CD8-positive, alpha-beta T cell (primary cell): ENCODE measurements at regions of chr12 and their contacts with region 1.

Region 1: GRCh38 chr12:25208554-25208953 is 13.5 kb downstream of the ETFRF1 start:
- DNase-seq: no peak
- ATAC-seq: no peak
- H3K4me3 ChIP-seq: no peak overlapping the region
- H3K4me3 Mint-ChIP-seq: no peak overlapping the region
- H3K27ac ChIP-seq: no peak overlapping the region
- H3K27ac Mint-ChIP-seq: peak overlapping the region; percentile 32
- H3K4me1 ChIP-seq: no peaks in the 10 kb centered on the region
- H3K4me1 Mint-ChIP-seq: peaks cover 13% of the 10 kb centered on the region
- H3K27me3 ChIP-seq: no peaks in the 10 kb centered on the region
- H3K27me3 Mint-ChIP-seq: no peaks in the 10 kb centered on the region
- CTCF ChIP-seq: no peak

Region 2: DNA sequence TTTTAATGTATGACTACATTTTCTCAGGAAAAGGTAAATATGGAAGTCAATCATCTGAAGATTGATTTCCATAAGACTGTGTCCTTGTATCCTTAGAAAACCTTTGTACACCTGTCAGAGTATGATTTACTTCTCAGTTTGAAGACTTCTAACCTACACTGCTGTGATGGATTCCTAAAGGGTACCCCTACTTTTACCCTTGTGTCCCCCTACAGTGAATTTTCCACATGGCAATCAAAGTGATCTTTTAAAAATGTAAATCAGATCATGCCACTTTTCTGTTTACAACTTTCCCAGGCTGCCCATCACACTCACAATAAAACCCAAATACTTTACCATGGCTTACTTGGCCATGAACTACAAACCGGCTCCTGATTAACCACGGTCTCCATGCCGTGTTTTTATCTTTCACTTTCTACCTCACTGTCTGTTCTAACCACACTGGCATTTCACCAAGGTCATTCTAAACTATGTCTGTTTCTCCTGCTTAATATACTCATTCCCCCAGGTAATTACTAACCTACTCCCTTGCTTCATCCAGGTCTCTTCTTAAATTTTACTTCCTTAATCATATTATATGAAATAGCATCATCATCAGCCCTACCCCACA is 21.7 kb before region 1 on chr12:
- CTCF ChIA-PET with region 1: no interaction called
- POLR2A ChIA-PET with region 1: no interaction called
- intact Hi-C with region 1: no loop called
- DNase-seq: peak in 2 of 9 experiments; percentile 46 to 61
- ATAC-seq: peak; percentile 75
- H3K4me3 ChIP-seq: peak overlapping the region; percentile 34 to 36
- H3K4me3 Mint-ChIP-seq: peak overlapping the region; percentile 86
- H3K27ac ChIP-seq: peak overlapping the region; percentile 11 to 26
- H3K27ac Mint-ChIP-seq: peak overlapping the region; percentile 85
- H3K4me1 ChIP-seq: peaks cover 7% of the 10 kb centered on the region
- H3K4me1 Mint-ChIP-seq: peaks cover 13% of the 10 kb centered on the region
- H3K27me3 ChIP-seq: no peaks in the 10 kb centered on the region
- H3K27me3 Mint-ChIP-seq: no peaks in the 10 kb centered on the region
- CTCF ChIP-seq: no peak

Region 3: GRCh38 chr12:25241167-25242020 is 32.8 kb after region 1 on chr12:
- CTCF ChIA-PET with region 1: interaction called, 10 read pairs
- POLR2A ChIA-PET with region 1: interaction called, 3 read pairs
- intact Hi-C with region 1: loop called (anchors 1 to 5 kb)
- DNase-seq: peak in 7 of 9 experiments; percentile 6 to 87 (median 37)
- ATAC-seq: peak; percentile 94
- H3K4me3 ChIP-seq: no peak overlapping the region
- H3K4me3 Mint-ChIP-seq: no peak overlapping the region
- H3K27ac ChIP-seq: peak overlapping the region; percentile 9 to 70
- H3K27ac Mint-ChIP-seq: peak overlapping the region; percentile 81
- H3K4me1 ChIP-seq: peaks cover 9% of the 10 kb centered on the region
- H3K4me1 Mint-ChIP-seq: peaks cover 65% of the 10 kb centered on the region
- H3K27me3 ChIP-seq: no peaks in the 10 kb centered on the region
- H3K27me3 Mint-ChIP-seq: no peaks in the 10 kb centered on the region
- CTCF ChIP-seq: peak; percentile 96

Region 4: GRCh38 chr12:25250744-25251730 is 42.5 kb after region 1 on chr12 and contains the start of gene KRAS:
- CTCF ChIA-PET with region 1: no interaction called
- POLR2A ChIA-PET with region 1: no interaction called
- intact Hi-C with region 1: loop called in 1 of 2 experiments (anchors 5 kb)
- DNase-seq: peak; percentile 84 to 98 (median 91)
- ATAC-seq: peak; percentile 90
- H3K4me3 ChIP-seq: peak within 1 kb of the TSS; percentile 70 to 79
- H3K4me3 Mint-ChIP-seq: peak within 1 kb of the TSS; percentile 93
- H3K27ac ChIP-seq: peak within 1 kb of the TSS; percentile 67 to 75
- H3K27ac Mint-ChIP-seq: peak within 1 kb of the TSS; percentile 95
- H3K4me1 ChIP-seq: peaks cover 11% of the 10 kb centered on the region
- H3K4me1 Mint-ChIP-seq: peaks cover 38% of the 10 kb centered on the region
- H3K27me3 ChIP-seq: no peaks in the 10 kb centered on the region
- H3K27me3 Mint-ChIP-seq: no peaks in the 10 kb centered on the region
- CTCF ChIP-seq: no peak
- total RNA-seq, gene KRAS: 47.1 to 49.3 TPM

Region 5: GRCh38 chr12:26425587-26426260 is 1217.2 kb after region 1 on chr12:
- CTCF ChIA-PET with region 1: no interaction called
- POLR2A ChIA-PET with region 1: no interaction called
- intact Hi-C with region 1: no loop called
- DNase-seq: no peak
- ATAC-seq: no peak
- H3K4me3 ChIP-seq: no peak overlapping the region
- H3K4me3 Mint-ChIP-seq: no peak overlapping the region
- H3K27ac ChIP-seq: no peak overlapping the region
- H3K27ac Mint-ChIP-seq: no peak overlapping the region
- H3K4me1 ChIP-seq: no peaks in the 10 kb centered on the region
- H3K4me1 Mint-ChIP-seq: no peaks in the 10 kb centered on the region
- H3K27me3 ChIP-seq: no peaks in the 10 kb centered on the region
- H3K27me3 Mint-ChIP-seq: no peaks in the 10 kb centered on the region
- CTCF ChIP-seq: no peak